Esophagus muscularis mucosa (tissue), 4 donors: ENCODE measurements at regions of chrX and their contacts with region 1.

Region 1: GRCh38 chrX:37926700-37927099 is 79.3 kb upstream of the DYNLT3 start:
- DNase-seq: no peak
- H3K4me3 ChIP-seq: no peak overlapping the region
- H3K27ac ChIP-seq: no peak overlapping the region
- H3K4me1 ChIP-seq: no peaks in the 10 kb centered on the region
- H3K27me3 ChIP-seq: peaks cover 0 to 2% (median 0%) of the 10 kb centered on the region in 4 donors
- CTCF ChIP-seq: peak; percentile 43 to 50 (median 45)
- EP300 ChIP-seq: no peak
- POLR2A ChIP-seq: no peak

Region 2: DNA sequence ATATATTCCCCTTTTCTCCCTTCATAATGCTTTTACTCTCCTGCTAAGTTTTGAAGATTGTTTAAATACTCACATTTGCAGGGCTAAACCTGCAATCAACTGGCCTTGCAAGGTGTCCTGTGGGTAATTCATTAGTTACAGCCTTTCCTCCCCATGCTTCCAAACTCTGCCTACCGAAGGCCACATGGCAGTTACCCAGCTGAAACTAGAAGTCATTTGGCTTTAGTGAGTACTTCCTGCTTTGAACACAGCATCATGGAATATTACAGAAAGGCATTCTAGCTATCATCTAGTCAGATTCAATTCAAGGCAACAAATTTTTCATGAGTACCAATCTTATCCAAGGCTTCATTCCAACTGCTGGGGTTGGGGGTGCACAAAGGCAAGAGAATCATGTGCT is 238.3 kb after region 1 on chrX:
- intact Hi-C with region 1: loop called (anchors 2 kb)
- DNase-seq: no peak
- H3K4me3 ChIP-seq: no peak overlapping the region
- H3K27ac ChIP-seq: no peak overlapping the region
- H3K4me1 ChIP-seq: no peaks in the 10 kb centered on the region
- H3K27me3 ChIP-seq: no peaks in the 10 kb centered on the region
- CTCF ChIP-seq: no peak
- EP300 ChIP-seq: no peak
- POLR2A ChIP-seq: no peak

Region 3: DNA sequence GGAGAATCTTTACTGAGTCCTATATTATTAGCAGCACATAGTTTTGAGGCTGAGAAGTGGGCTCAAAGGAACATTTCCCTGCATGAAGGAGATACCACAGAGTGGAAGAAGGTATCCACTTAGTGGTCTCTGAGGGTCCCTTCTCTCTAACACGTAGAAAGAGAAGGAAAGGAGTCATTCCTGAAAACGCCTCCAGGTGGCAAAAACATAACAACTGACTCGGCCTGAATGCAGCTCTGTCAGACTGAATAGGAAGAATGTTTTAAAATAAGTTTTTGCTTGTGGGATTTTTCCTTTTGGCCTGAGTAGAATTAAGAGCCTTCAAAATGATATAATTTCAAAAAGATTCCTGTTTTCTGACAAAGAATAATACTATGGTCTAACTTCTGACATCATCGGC is 377.3 kb after region 1 on chrX:
- intact Hi-C with region 1: no loop called
- DNase-seq: no peak
- H3K4me3 ChIP-seq: no peak overlapping the region
- H3K27ac ChIP-seq: no peak overlapping the region
- H3K4me1 ChIP-seq: no peaks in the 10 kb centered on the region
- H3K27me3 ChIP-seq: no peaks in the 10 kb centered on the region
- CTCF ChIP-seq: peak in 1 of 3 experiments; percentile 20
- EP300 ChIP-seq: no peak
- POLR2A ChIP-seq: no peak

Region 4: DNA sequence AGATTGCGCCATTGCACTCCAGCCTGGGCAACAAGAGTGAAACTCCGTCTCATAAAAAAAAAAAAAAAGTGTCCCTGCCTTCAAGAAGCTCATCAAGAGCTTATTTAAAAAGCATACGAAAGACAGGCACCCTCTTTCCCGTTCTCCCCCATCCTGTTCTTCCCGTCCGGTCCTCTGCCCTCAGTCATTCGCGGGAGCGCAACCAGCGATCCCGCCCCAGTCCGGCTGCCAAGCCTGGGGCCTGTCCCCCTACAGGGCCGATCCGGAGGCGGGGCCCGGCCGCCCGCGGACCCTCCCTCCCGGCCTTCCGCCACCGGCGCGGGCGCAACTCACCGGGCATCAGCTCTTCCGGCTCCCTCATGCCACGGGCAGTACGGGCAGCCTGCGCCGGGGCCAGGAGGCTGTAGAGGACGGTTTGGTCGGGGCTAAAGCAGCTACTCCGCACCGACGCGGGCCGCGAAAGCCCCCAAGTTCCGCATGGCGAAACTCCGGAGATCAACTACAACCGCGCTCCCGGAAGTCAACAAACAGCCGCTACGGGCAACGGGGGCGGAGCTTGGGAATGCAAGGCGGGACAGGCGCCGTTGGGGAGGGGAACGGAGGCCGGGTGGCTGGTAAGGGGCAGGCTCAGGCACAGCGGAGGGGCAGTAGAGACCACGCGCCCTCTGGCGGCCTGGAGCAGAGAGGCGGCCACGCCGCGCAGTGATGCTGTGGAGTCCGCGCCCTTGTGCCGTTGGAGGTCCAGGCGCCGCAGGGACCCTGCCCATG is 400.5 kb after region 1 on chrX and contains the start of gene RPGR:
- intact Hi-C with region 1: loop called (anchors 10 kb)
- DNase-seq: peak; percentile 94
- H3K4me3 ChIP-seq: peak within 1 kb of the TSS; percentile 65 to 76 (median 72)
- H3K27ac ChIP-seq: peak within 1 kb of the TSS; percentile 83 to 91 (median 88)
- H3K4me1 ChIP-seq: peaks cover 4 to 9% (median 7%) of the 10 kb centered on the region in 4 donors
- H3K27me3 ChIP-seq: no peaks in the 10 kb centered on the region
- CTCF ChIP-seq: peak; percentile 73 to 80 (median 79)
- EP300 ChIP-seq: no peak
- POLR2A ChIP-seq: no peak
- total RNA-seq, gene RPGR: 9.6 to 17.0 (median 11.9) TPM

Region 5: GRCh38 chrX:38375891-38376290 is 449.2 kb after region 1 on chrX:
- intact Hi-C with region 1: no loop called
- DNase-seq: no peak
- H3K4me3 ChIP-seq: no peak overlapping the region
- H3K27ac ChIP-seq: no peak overlapping the region
- H3K4me1 ChIP-seq: no peaks in the 10 kb centered on the region
- H3K27me3 ChIP-seq: peaks cover 0 to 11% (median 0%) of the 10 kb centered on the region in 4 donors
- CTCF ChIP-seq: peak in 1 of 3 experiments; percentile 4
- EP300 ChIP-seq: no peak
- POLR2A ChIP-seq: no peak